ENCODE measurements at regions of chr15 and their contacts with region 1.

Region 1: GRCh38 chr15:84929744-84930371 is 45.4 kb downstream of the SLC28A1 start:
- DNase-seq: peak; percentile 84 to 94
- H3K4me3 ChIP-seq: no peak overlapping the region
- H3K4me3 Mint-ChIP-seq: peak overlapping the region; percentile 25
- H3K27ac Mint-ChIP-seq: peak overlapping the region; percentile 85
- H3K4me1 ChIP-seq: peaks cover 31% of the 10 kb centered on the region
- H3K4me1 Mint-ChIP-seq: peaks cover 16% of the 10 kb centered on the region
- H3K27me3 ChIP-seq: no peaks in the 10 kb centered on the region
- H3K27me3 Mint-ChIP-seq: no peaks in the 10 kb centered on the region
- CTCF ChIP-seq: no peak

Region 2: GRCh38 chr15:84588053-84588874 is 341.6 kb before region 1 on chr15:
- CTCF ChIA-PET with region 1: interaction called, 7 read pairs
- POLR2A ChIA-PET with region 1: no interaction called
- intact Hi-C with region 1: loop called (anchors 5 kb)
- DNase-seq: peak; percentile 83 to 91
- H3K4me3 ChIP-seq: peak overlapping the region; percentile 26
- H3K4me3 Mint-ChIP-seq: peak overlapping the region; percentile 67
- H3K27ac Mint-ChIP-seq: no peak overlapping the region
- H3K4me1 ChIP-seq: no peaks in the 10 kb centered on the region
- H3K4me1 Mint-ChIP-seq: no peaks in the 10 kb centered on the region
- H3K27me3 ChIP-seq: no peaks in the 10 kb centered on the region
- H3K27me3 Mint-ChIP-seq: peaks cover 7% of the 10 kb centered on the region
- CTCF ChIP-seq: peak; percentile 77 to 90

Region 3: GRCh38 chr15:84716036-84716799 is 213.6 kb before region 1 on chr15 and contains the start of gene SEC11A:
- CTCF ChIA-PET with region 1: interaction called, 3 read pairs
- POLR2A ChIA-PET with region 1: interaction called, 4 read pairs
- intact Hi-C with region 1: loop called (anchors 10 kb)
- DNase-seq: peak; percentile 95 to 97
- H3K4me3 ChIP-seq: peak within 1 kb of the TSS; percentile 60
- H3K4me3 Mint-ChIP-seq: peak within 1 kb of the TSS; percentile 81
- H3K27ac Mint-ChIP-seq: peak within 1 kb of the TSS; percentile 87
- H3K4me1 ChIP-seq: peaks cover 5% of the 10 kb centered on the region
- H3K4me1 Mint-ChIP-seq: peaks cover 6% of the 10 kb centered on the region
- H3K27me3 ChIP-seq: no peaks in the 10 kb centered on the region
- H3K27me3 Mint-ChIP-seq: no peaks in the 10 kb centered on the region
- CTCF ChIP-seq: no peak
- total RNA-seq, gene SEC11A: 200 and 211 TPM in 2 replicates

Region 4: GRCh38 chr15:84826369-84826823 is 103.5 kb before region 1 on chr15:
- CTCF ChIA-PET with region 1: interaction called, 3 read pairs
- POLR2A ChIA-PET with region 1: no interaction called
- intact Hi-C with region 1: loop called (anchors 1 kb)
- DNase-seq: peak; percentile 27 to 51
- H3K4me3 ChIP-seq: no peak overlapping the region
- H3K4me3 Mint-ChIP-seq: no peak overlapping the region
- H3K27ac Mint-ChIP-seq: no peak overlapping the region
- H3K4me1 ChIP-seq: peaks cover 11% of the 10 kb centered on the region; the same call in 1 of the 2 replicates
- H3K4me1 Mint-ChIP-seq: peaks cover 10% of the 10 kb centered on the region
- H3K27me3 ChIP-seq: no peaks in the 10 kb centered on the region
- H3K27me3 Mint-ChIP-seq: no peaks in the 10 kb centered on the region
- CTCF ChIP-seq: peak; percentile 43 to 52

Region 5: GRCh38 chr15:84863565-84864443 is 66.1 kb before region 1 on chr15:
- CTCF ChIA-PET with region 1: interaction called, 11 read pairs
- POLR2A ChIA-PET with region 1: no interaction called
- intact Hi-C with region 1: loop called (anchors 1 kb)
- DNase-seq: peak in 1 of 2 experiments; percentile 13
- H3K4me3 ChIP-seq: no peak overlapping the region
- H3K4me3 Mint-ChIP-seq: no peak overlapping the region
- H3K27ac Mint-ChIP-seq: no peak overlapping the region
- H3K4me1 ChIP-seq: peaks cover 12% of the 10 kb centered on the region
- H3K4me1 Mint-ChIP-seq: no peaks in the 10 kb centered on the region
- H3K27me3 ChIP-seq: no peaks in the 10 kb centered on the region
- H3K27me3 Mint-ChIP-seq: no peaks in the 10 kb centered on the region
- CTCF ChIP-seq: no peak